Activated T-helper 1 cell treated with anti-CD3 and anti-CD28 coated beads, Interleukin-12 subunit alpha, Interleukin-12 subunit beta, Interleukin-2, Interleukin-4 antibody, amounts not matched to agents 30 ng/mL and 10 ng/mL and 1 ng/mL, durations not matched to agents 14 hours and 24 hours and 36 hours (primary cell): ENCODE measurements at regions of chr2 and their contacts with region 1.

Region 1: GRCh38 chr2:101751875-101752619 is 54.5 kb downstream of the MAP4K4 start:
- DNase-seq: no peak
- H3K4me3 Mint-ChIP-seq: no peak overlapping the region
- H3K27ac Mint-ChIP-seq: no peak overlapping the region
- H3K4me1 Mint-ChIP-seq: peaks cover 61% of the 10 kb centered on the region
- H3K27me3 Mint-ChIP-seq: no peaks in the 10 kb centered on the region

Region 2: GRCh38 chr2:101788995-101789970 is 37.2 kb after region 1 on chr2:
- intact Hi-C with region 1: loop called (anchors 5 kb)
- DNase-seq: no peak
- H3K4me3 Mint-ChIP-seq: no peak overlapping the region
- H3K27ac Mint-ChIP-seq: peak overlapping the region; percentile 51
- H3K4me1 Mint-ChIP-seq: peaks cover 29% of the 10 kb centered on the region
- H3K27me3 Mint-ChIP-seq: no peaks in the 10 kb centered on the region